Aorta (tissue), 5 donors: ENCODE measurements at regions of chr22 and their contacts with region 1.

Region 1: DNA sequence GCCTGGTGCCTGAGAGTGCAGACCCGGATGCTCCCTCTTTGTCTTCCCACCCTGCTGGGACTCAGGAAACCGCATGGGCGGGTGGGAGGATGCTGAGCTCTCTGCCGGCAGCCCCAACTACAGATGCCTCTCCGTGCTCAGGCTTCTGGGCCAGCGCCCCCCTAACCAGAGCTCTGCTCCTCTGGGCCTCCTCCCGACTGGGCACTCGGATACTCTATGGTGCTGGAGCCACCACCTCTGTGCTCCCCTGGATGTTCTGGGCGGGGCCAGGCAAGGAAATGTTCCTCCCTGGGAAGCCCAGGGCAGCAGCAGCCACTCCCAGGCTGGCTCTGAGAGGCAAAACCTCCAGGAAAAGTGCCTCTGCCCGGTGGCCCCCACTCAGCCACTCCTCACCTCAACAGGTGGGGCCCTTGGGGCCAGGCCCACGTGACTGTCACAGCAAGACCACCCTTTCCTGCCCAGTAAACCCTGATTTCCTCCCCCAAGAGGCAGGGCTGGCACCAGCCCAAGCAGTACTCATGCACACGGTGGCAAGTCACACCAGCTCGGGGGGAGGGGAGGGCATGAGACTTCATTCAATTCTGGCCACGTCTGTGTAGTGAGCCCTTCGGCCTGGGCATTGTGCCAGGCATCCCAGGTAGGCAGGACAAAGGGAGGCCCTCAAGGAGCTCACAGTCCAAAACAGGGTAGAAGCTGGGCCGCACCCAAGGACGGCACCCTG is 54.7 kb upstream of the TCF20 start:
- DNase-seq: no peak
- ATAC-seq: no peak
- H3K4me3 ChIP-seq: no peak overlapping the region
- H3K27ac ChIP-seq: no peak overlapping the region
- H3K4me1 ChIP-seq: no peaks in the 10 kb centered on the region
- H3K27me3 ChIP-seq: no peaks in the 10 kb centered on the region

Region 2: DNA sequence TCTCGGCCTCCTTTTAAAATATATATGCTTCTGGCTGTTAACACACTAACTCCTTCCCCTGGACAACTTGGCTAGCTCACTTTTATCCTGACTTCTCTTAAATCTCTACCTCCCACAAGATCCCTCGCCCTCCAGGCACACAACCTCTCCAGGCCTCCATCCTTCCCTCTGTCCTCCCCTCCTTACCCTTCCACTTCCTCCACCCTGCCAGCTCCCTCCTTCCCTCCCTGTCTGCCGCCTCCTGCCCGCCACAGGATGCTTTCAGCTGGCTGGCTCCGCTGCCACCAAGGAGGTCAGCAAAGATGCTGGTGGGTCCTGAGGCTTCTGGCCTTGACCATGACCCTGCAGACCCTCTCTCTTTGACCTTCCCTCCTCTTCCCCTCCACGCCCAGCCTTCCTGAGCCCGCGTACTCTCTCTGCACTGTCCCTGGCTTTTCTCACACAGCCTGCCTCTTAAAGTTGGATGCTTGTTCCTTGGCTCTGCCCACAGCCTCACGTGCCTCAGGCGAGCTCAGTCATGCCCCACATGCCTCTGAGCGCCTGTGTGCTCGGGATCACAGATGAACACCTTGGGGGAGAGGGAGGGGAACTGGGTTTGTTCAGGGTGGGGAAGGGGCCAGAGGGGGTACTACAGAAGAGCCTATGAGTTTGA is 100.3 kb after region 1 on chr22:
- intact Hi-C with region 1: loop called in 1 of 2 experiments (anchors 10 kb)
- DNase-seq: no peak
- ATAC-seq: no peak
- H3K4me3 ChIP-seq: no peak overlapping the region
- H3K27ac ChIP-seq: no peak overlapping the region
- H3K4me1 ChIP-seq: no peaks in the 10 kb centered on the region
- H3K27me3 ChIP-seq: no peaks in the 10 kb centered on the region

Region 3: GRCh38 chr22:42596336-42596735 is 271.2 kb after region 1 on chr22:
- intact Hi-C with region 1: no loop called
- DNase-seq: no peak
- ATAC-seq: peak; percentile 76
- H3K4me3 ChIP-seq: no peak overlapping the region
- H3K27ac ChIP-seq: no peak overlapping the region
- H3K4me1 ChIP-seq: no peaks in the 10 kb centered on the region
- H3K27me3 ChIP-seq: no peaks in the 10 kb centered on the region